ENCODE measurements at regions of chr15 and their contacts with region 1.

Region 1: DNA sequence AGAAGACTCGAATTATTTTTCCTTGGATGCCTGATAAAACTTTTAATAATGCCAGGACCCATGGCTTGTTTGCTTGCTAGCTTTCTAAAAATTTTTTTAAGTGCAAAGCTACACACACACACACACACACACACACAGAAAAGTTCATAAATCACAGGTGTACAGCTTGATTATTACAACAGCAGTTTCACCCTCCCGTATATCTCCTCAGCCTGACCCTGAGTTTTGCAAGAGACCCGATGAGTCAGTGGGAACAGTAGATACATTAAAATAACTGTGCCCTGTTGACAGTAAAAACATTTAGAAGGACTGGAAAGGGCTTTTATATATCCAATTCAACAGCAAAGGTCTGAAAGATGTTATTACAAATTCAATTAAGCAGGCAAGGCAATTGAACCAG is 46.7 kb downstream of the EMC4 start:
- DNase-seq: no peak
- ATAC-seq: no peak
- H3K4me3 Mint-ChIP-seq: no peak overlapping the region
- H3K27ac Mint-ChIP-seq: no peak overlapping the region
- H3K4me1 Mint-ChIP-seq: peaks cover 19% of the 10 kb centered on the region
- H3K27me3 Mint-ChIP-seq: no peaks in the 10 kb centered on the region

Region 2: GRCh38 chr15:34318277-34319079 is 47.0 kb after region 1 on chr15:
- CTCF ChIA-PET with region 1: no interaction called
- POLR2A ChIA-PET with region 1: no interaction called
- intact Hi-C with region 1: loop called in 1 of 2 experiments (anchors 5 kb)
- DNase-seq: peak; percentile 54
- ATAC-seq: peak; percentile 83
- H3K4me3 Mint-ChIP-seq: peak overlapping the region; percentile 81
- H3K27ac Mint-ChIP-seq: peak overlapping the region; percentile 88
- H3K4me1 Mint-ChIP-seq: peaks cover 61% of the 10 kb centered on the region
- H3K27me3 Mint-ChIP-seq: no peaks in the 10 kb centered on the region